Endothelial cell of umbilical vein (primary cell): ENCODE measurements at regions of chr1 and their contacts with region 1.

Region 1: DNA sequence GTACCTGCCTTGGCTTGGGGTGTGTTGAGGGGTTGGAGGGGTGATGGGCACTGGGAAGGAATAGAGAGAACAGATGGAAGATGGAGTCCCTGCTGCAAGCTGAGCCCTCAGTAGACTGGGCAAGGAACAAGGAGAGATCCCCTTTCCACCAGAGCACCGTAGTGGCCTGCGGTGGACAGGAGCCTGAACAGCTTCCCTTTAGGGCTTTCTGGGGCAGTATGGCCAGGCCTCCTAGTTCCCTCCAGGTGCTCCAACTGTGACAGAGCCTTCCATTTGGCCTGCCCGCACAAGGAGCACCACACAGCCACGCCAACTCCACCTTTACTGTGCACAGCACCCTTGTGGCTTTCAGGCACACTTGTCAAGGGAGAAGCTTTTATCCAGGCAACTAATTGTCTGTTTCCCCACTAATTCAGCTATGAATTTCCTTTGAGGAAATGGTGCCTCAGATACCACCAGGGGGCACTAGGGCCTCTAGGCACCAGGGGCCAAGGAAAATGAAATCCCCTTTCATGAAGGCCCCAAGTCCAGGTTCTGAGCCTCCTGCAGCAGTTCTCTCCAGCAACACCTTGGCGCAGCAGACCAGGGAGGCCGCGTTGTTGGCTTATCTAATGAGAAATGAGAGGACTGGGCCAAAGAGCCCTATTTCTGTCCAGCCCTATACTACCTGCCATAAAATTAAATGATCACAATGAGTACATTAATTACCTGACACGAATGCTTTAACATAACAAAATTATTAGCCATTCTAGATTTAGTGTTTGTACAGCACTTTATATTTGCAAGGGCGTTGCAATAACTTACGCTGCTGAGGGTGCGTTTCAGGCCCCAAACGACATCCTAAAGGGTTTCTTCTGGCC is 23.1 kb upstream of the ERI3 start:
- DNase-seq: peak; percentile 61
- H3K4me3 ChIP-seq: no peak overlapping the region
- H3K27ac ChIP-seq: no peak overlapping the region
- H3K4me1 ChIP-seq: no peaks in the 10 kb centered on the region
- H3K27me3 ChIP-seq: peaks cover 3 to 14% of the 10 kb centered on the region in 2 experiments
- CTCF ChIP-seq: peak; percentile 79 to 81
- POLR2A ChIP-seq: no peak

Region 2: DNA sequence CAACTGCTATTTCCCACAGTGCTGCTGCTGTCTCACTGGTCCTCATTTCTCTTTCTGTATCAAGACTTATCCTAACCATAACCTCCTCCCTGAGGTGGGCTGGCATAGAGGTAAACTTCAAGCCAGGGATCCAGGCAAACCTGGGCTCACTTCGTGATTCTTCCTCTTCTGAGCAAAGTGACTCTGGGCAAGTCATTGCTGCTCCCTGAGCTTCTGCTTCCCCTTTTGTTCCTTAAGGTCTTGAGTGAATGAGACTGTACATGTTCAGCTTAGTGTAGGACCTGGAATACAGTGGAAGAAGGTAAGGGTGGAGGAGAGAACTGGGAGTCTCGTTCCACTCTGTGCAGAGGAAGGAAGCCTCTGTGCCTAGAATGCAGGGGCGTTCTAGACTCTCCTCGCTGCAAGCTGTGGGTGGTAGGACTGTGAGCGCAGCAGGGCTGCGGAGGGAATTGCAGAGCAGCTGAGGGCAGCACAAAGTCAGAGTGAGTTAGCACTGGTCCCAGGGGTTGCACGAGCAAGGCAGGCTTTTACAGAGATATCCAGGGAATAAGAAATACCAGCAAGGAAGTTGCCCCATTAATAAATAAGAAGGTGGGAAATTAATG is 11.7 kb before region 1 on chr1:
- CTCF ChIA-PET with region 1: interaction called, 16 read pairs
- POLR2A ChIA-PET with region 1: no interaction called
- dilution Hi-C with region 1: no loop called
- intact Hi-C with region 1: no loop called
- DNase-seq: no peak
- H3K4me3 ChIP-seq: no peak overlapping the region
- H3K27ac ChIP-seq: no peak overlapping the region
- H3K4me1 ChIP-seq: no peaks in the 10 kb centered on the region
- H3K27me3 ChIP-seq: peaks cover 14 to 25% of the 10 kb centered on the region in 2 experiments
- CTCF ChIP-seq: no peak
- POLR2A ChIP-seq: no peak

Region 3: GRCh38 chr1:44423591-44424537 is 45.7 kb after region 1 on chr1:
- CTCF ChIA-PET with region 1: interaction called, 23 read pairs
- POLR2A ChIA-PET with region 1: no interaction called
- dilution Hi-C with region 1: no loop called
- intact Hi-C with region 1: no loop called
- DNase-seq: peak; percentile 50
- H3K4me3 ChIP-seq: no peak overlapping the region
- H3K27ac ChIP-seq: no peak overlapping the region
- H3K4me1 ChIP-seq: peaks cover 32% of the 10 kb centered on the region
- H3K27me3 ChIP-seq: peaks cover 25% of the 10 kb centered on the region in 2 experiments
- CTCF ChIP-seq: no peak
- POLR2A ChIP-seq: no peak

Region 4: GRCh38 chr1:44500181-44501046 is 122.3 kb after region 1 on chr1:
- CTCF ChIA-PET with region 1: interaction called, 184 read pairs
- POLR2A ChIA-PET with region 1: interaction called, 5 read pairs
- dilution Hi-C with region 1: no loop called
- intact Hi-C with region 1: loop called (anchors 1 kb)
- DNase-seq: peak; percentile 59
- H3K4me3 ChIP-seq: no peak overlapping the region
- H3K27ac ChIP-seq: no peak overlapping the region
- H3K4me1 ChIP-seq: no peaks in the 10 kb centered on the region
- H3K27me3 ChIP-seq: peaks cover 26 to 29% of the 10 kb centered on the region in 2 experiments
- CTCF ChIP-seq: peak in 1 of 2 donors; percentile 48
- POLR2A ChIP-seq: no peak

Region 5: DNA sequence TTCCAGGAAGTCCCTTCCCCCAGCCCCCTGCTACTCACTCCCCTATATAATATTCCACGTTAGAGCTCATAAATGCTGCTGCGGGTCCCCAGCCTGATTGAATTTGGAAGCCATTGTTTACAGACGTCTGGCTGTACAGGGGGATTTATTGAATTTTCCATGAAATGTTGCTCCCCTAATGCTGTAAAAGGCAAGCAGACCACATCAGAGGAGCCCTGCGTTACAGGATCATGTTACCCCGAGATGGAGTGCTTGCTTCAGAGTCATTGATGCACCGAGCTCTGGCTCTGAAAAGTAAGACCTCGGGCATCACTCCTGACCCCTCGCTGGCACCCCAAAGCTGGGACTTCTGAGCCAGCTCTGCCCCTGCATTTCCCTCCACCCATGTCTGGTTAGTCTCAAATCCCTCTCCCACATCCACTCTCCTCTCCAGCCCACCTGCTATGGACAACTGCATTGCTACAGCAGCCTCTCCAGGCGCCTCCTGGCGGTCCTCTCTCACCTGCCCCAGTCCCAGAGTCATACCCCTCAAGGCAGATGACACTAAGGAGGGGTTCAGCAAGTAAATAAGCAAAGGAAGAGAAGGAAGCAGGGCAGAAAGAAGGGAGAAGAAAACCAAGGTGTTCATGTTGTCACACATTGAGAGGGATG is 168.4 kb after region 1 on chr1:
- CTCF ChIA-PET with region 1: interaction called, 25 read pairs
- POLR2A ChIA-PET with region 1: no interaction called
- dilution Hi-C with region 1: no loop called
- intact Hi-C with region 1: no loop called
- DNase-seq: no peak
- H3K4me3 ChIP-seq: no peak overlapping the region
- H3K27ac ChIP-seq: no peak overlapping the region
- H3K4me1 ChIP-seq: no peaks in the 10 kb centered on the region
- H3K27me3 ChIP-seq: peaks cover 0 to 12% of the 10 kb centered on the region in 2 experiments
- CTCF ChIP-seq: no peak
- POLR2A ChIP-seq: no peak

Region 6: GRCh38 chr1:44587796-44588460 is 209.8 kb after region 1 on chr1:
- CTCF ChIA-PET with region 1: interaction called, 398 read pairs
- POLR2A ChIA-PET with region 1: no interaction called
- dilution Hi-C with region 1: no loop called
- intact Hi-C with region 1: no loop called
- DNase-seq: no peak
- H3K4me3 ChIP-seq: no peak overlapping the region
- H3K27ac ChIP-seq: no peak overlapping the region
- H3K4me1 ChIP-seq: no peaks in the 10 kb centered on the region
- H3K27me3 ChIP-seq: peaks cover 8% of the 10 kb centered on the region in 2 experiments
- CTCF ChIP-seq: no peak
- POLR2A ChIP-seq: no peak

Region 7: GRCh38 chr1:44652445-44653106 is 274.4 kb after region 1 on chr1:
- CTCF ChIA-PET with region 1: interaction called, 84 read pairs
- POLR2A ChIA-PET with region 1: no interaction called
- dilution Hi-C with region 1: no loop called
- intact Hi-C with region 1: loop called (anchors 1 kb)
- DNase-seq: peak; percentile 72
- H3K4me3 ChIP-seq: no peak overlapping the region
- H3K27ac ChIP-seq: no peak overlapping the region
- H3K4me1 ChIP-seq: no peaks in the 10 kb centered on the region
- H3K27me3 ChIP-seq: no peaks in the 10 kb centered on the region
- CTCF ChIP-seq: peak; percentile 92 to 94
- POLR2A ChIP-seq: no peak